ENCODE measurements at regions of chr6 and their contacts with region 1.

Region 1: DNA sequence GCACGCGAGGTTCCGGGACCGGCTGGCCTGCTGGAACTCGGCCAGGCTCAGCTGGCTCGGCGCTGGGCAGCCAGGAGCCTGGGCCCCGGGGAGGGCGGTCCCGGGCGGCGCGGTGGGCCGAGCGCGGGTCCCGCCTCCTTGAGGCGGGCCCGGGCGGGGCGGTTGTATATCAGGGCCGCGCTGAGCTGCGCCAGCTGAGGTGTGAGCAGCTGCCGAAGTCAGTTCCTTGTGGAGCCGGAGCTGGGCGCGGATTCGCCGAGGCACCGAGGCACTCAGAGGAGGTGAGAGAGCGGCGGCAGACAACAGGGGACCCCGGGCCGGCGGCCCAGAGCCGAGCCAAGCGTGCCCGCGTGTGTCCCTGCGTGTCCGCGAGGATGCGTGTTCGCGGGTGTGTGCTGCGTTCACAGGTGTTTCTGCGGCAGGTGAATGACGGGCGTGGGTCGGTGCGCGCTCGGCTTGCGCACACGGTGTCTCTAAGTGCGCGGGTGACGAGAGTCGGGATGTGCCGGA is at the start of gene CDKN1A:
- DNase-seq: peak; percentile 33 to 84 (median 51)
- ATAC-seq: peak; percentile 64
- H3K4me3 ChIP-seq: peak within 1 kb of the TSS; percentile 62
- H3K4me3 Mint-ChIP-seq: peak within 1 kb of the TSS; percentile 87 to 98 (median 94)
- H3K27ac ChIP-seq: peak within 1 kb of the TSS; percentile 66
- H3K27ac Mint-ChIP-seq: peak within 1 kb of the TSS; percentile 73 to 96 (median 87)
- H3K4me1 ChIP-seq: peaks cover 19 to 29% of the 10 kb centered on the region in 2 donors
- H3K4me1 Mint-ChIP-seq: peaks cover 16 to 65% (median 30%) of the 10 kb centered on the region in 7 donors
- H3K27me3 ChIP-seq: no peaks in the 10 kb centered on the region
- H3K27me3 Mint-ChIP-seq: peaks cover 0 to 5% (median 0%) of the 10 kb centered on the region in 5 donors
- total RNA-seq, gene CDKN1A: 1.5 to 156 (median 53.6) TPM

Region 2: DNA sequence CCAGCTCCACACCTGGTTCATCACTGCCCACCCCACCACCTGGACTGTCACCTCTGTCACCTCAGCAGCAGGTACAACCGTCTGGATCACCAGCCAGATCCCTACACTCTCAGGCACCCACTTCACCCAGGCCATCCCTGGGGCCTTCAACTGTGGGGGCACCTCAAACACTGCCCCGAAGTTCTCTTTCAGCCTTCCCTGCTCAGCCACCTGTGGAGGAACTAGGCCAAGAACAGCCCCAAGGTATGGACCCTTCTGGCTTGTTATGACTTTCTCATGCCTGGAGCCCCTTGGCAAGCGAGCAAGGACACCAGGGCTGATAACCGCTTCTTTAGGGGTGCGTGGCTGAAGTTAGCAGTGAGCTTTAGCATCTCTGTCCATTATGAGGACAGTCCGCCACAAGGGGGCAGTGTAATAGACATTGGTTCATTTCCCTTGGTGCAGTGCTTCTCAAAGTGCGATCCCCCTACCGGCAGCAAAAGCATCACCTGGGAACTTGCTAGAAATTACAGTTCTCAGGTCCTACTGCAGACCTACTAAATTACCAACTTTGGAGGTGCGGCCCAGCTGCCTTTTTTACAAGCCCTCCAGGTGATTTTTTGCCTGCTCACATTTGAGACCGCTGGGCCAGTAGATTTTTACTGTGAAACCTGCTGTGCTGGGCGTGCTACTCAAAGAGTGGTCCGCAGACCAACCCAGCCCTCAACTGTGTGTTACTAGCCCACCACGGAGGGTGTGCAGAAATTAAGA is 376.2 kb before region 1 on chr6:
- CTCF ChIA-PET with region 1: interaction called, 5 read pairs
- POLR2A ChIA-PET with region 1: no interaction called
- intact Hi-C with region 1: loop called in 1 of 2 experiments (anchors 1 kb)
- DNase-seq: peak; percentile 74 to 92 (median 88)
- ATAC-seq: peak; percentile 100
- H3K4me3 ChIP-seq: no peak overlapping the region
- H3K4me3 Mint-ChIP-seq: no peak overlapping the region
- H3K27ac ChIP-seq: no peak overlapping the region
- H3K27ac Mint-ChIP-seq: peak overlapping the region in 4 of 9 donors; percentile 29 to 59 (median 48)
- H3K4me1 ChIP-seq: no peaks in the 10 kb centered on the region
- H3K4me1 Mint-ChIP-seq: peaks cover 0 to 8% (median 6%) of the 10 kb centered on the region in 7 donors
- H3K27me3 ChIP-seq: no peaks in the 10 kb centered on the region
- H3K27me3 Mint-ChIP-seq: peaks cover 0 to 29% (median 5%) of the 10 kb centered on the region in 5 donors

Region 3: GRCh38 chr6:36442671-36443470 is 235.7 kb before region 1 on chr6 and contains the starts of genes KCTD20 and PXT1:
- CTCF ChIA-PET with region 1: no interaction called
- POLR2A ChIA-PET with region 1: no interaction called
- intact Hi-C with region 1: loop called (anchors 1 to 2 kb)
- DNase-seq: peak; percentile 78 to 89 (median 83)
- ATAC-seq: peak; percentile 91
- H3K4me3 ChIP-seq: peak within 1 kb of the TSS; percentile 69
- H3K4me3 Mint-ChIP-seq: peak within 1 kb of the TSS; percentile 85 to 99 (median 96)
- H3K27ac ChIP-seq: peak within 1 kb of the TSS; percentile 97
- H3K27ac Mint-ChIP-seq: peak within 1 kb of the TSS; percentile 92 to 99 (median 97)
- H3K4me1 ChIP-seq: peaks cover 20 to 31% of the 10 kb centered on the region in 2 donors
- H3K4me1 Mint-ChIP-seq: peaks cover 28 to 56% (median 50%) of the 10 kb centered on the region in 7 donors
- H3K27me3 ChIP-seq: no peaks in the 10 kb centered on the region
- H3K27me3 Mint-ChIP-seq: no peaks in the 10 kb centered on the region
- total RNA-seq, gene KCTD20: 33.0 to 55.8 (median 33.2) TPM
- total RNA-seq, gene PXT1: 0.15 to 0.64 (median 0.32) TPM

Region 4: DNA sequence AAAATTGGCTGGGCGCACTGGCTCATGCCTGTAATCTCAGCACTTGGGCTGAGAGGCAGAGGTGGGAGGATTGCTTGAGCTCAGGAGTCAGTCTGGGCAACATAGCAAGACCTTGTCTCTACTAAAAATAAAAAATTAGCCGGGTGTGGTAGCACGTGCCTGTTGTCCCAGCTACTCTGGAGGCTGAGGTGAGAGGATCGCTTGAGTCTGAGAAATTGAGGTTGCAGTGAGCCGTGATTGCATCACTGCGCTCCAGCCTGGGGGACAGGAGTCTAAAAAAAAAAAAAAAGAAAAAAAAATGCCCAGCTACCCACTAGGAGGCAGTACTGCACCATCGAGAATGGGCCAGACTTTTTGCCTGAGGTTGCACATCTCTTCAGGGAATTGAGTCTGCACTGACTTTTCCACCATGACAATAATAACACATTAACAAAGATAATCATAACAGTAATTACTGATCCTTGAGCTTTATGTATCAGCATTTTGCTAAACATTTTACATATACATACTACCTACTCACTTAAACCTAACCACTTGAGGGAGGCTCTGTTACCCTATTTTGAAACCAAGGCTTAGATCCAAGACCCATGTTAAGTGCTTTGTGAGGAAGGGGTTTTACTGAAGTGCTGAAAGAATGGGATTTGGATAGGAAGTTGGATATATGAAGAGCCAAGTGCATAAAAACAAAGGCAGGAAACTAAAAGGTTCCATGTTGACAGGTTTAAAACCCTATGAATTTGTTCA is 63.4 kb before region 1 on chr6:
- CTCF ChIA-PET with region 1: interaction called, 6 read pairs
- POLR2A ChIA-PET with region 1: interaction called, 4 read pairs
- intact Hi-C with region 1: loop called (anchors 1 kb)
- DNase-seq: peak in 8 of 9 donors; percentile 21 to 62 (median 50)
- ATAC-seq: peak; percentile 83
- H3K4me3 ChIP-seq: no peak overlapping the region
- H3K4me3 Mint-ChIP-seq: no peak overlapping the region
- H3K27ac ChIP-seq: no peak overlapping the region
- H3K27ac Mint-ChIP-seq: peak overlapping the region in 7 of 9 donors; percentile 14 to 78 (median 60)
- H3K4me1 ChIP-seq: no peaks in the 10 kb centered on the region
- H3K4me1 Mint-ChIP-seq: peaks cover 7 to 26% (median 18%) of the 10 kb centered on the region in 7 donors
- H3K27me3 ChIP-seq: no peaks in the 10 kb centered on the region
- H3K27me3 Mint-ChIP-seq: no peaks in the 10 kb centered on the region

Region 5: GRCh38 chr6:36692220-36692619 is 13.6 kb after region 1 on chr6:
- CTCF ChIA-PET with region 1: no interaction called
- POLR2A ChIA-PET with region 1: no interaction called
- intact Hi-C with region 1: loop called in 1 of 2 experiments (anchors 1 kb)
- DNase-seq: no peak
- ATAC-seq: peak; percentile 91
- H3K4me3 ChIP-seq: no peak overlapping the region
- H3K4me3 Mint-ChIP-seq: peak overlapping the region in 1 of 10 donors; percentile 72
- H3K27ac ChIP-seq: no peak overlapping the region
- H3K27ac Mint-ChIP-seq: peak overlapping the region in 1 of 9 donors; percentile 84
- H3K4me1 ChIP-seq: peaks cover 0 to 10% of the 10 kb centered on the region in 2 donors
- H3K4me1 Mint-ChIP-seq: peaks cover 0 to 63% (median 9%) of the 10 kb centered on the region in 7 donors
- H3K27me3 ChIP-seq: no peaks in the 10 kb centered on the region
- H3K27me3 Mint-ChIP-seq: no peaks in the 10 kb centered on the region